ENCODE measurements at regions of chr2 and their contacts with region 1.

Region 1: DNA sequence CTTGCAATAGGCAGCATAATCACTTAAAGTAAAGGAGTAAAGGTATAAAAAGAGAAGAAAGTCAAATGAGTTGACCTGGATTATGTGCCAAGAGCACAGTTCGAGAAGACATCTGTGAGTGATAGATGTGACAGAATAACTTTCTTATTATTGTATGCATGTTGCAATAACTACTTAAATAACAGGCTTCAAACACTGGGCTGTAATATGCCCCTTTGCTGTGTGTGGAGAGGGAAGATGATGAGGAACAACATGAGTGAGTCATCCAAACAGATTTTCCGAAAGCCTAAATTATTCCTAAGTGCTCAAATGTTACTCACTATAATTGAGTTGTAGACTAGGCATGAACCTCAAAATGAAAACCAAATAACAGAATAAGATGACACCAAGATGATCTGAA is 328.1 kb downstream of the EXOC6B start:
- DNase-seq: no peak
- ATAC-seq: no peak
- H3K4me3 ChIP-seq: no peak overlapping the region
- H3K4me3 Mint-ChIP-seq: no peak overlapping the region
- H3K27ac ChIP-seq: no peak overlapping the region
- H3K27ac Mint-ChIP-seq: no peak overlapping the region
- H3K4me1 ChIP-seq: no peaks in the 10 kb centered on the region
- H3K4me1 Mint-ChIP-seq: no peaks in the 10 kb centered on the region
- H3K27me3 ChIP-seq: no peaks in the 10 kb centered on the region
- H3K27me3 Mint-ChIP-seq: no peaks in the 10 kb centered on the region

Region 2: DNA sequence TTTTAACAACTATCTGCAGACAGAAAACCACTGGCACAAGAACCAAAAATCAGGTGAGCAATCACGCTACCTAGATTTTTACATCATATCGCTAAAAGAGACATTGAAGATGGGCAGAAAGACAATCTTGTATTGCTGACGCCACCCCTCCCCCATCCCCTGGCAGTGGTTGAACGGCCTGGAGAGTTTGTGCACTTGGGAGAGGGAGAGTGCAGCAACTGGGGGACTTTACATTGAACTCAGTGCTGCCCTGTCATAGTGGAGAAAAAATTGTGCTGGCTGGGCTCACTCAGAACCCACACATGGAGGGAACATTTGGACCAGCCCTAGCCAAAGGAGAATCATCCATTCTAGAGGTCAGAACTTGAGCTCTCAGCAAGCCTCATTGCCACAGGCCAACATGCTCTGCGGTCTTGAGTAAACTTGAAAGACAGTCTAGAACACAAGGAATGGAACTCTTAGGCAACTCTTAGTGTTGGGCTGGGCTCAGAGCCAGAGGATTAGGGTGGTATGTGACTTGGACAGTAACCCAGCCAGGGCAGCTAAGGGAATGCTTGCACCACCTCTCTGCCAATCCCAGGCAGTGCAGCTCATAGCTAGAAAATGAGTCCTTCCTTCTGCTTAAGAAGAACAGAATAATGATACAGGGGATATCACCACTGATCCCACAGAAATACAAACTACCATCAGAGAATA is 130.1 kb before region 1 on chr2:
- CTCF ChIA-PET with region 1: no interaction called
- POLR2A ChIA-PET with region 1: no interaction called
- DNase-seq: no peak
- ATAC-seq: no peak
- H3K4me3 ChIP-seq: no peak overlapping the region
- H3K4me3 Mint-ChIP-seq: no peak overlapping the region
- H3K27ac ChIP-seq: no peak overlapping the region
- H3K27ac Mint-ChIP-seq: no peak overlapping the region
- H3K4me1 ChIP-seq: no peaks in the 10 kb centered on the region
- H3K4me1 Mint-ChIP-seq: no peaks in the 10 kb centered on the region
- H3K27me3 ChIP-seq: no peaks in the 10 kb centered on the region
- H3K27me3 Mint-ChIP-seq: no peaks in the 10 kb centered on the region

Region 3: DNA sequence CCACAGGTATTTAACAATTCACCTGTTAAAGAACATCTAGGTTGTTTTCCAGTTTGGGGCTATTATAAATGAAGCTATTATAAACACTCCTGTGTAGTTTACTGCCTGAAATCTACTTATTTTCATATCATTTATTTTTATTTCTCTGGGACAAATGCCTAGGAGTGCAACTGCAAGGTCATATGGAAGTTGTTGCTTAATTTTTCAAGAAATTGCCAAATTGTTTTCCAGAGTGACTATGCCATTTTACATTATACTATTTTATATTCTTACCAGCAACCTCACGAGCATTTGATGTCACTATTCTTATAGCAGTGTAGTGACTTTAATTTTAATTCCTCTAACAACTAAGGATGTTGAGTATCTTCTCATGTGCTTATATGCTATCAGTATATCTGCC is 29.7 kb after region 1 on chr2:
- CTCF ChIA-PET with region 1: no interaction called
- POLR2A ChIA-PET with region 1: no interaction called
- DNase-seq: no peak
- ATAC-seq: no peak
- H3K4me3 ChIP-seq: no peak overlapping the region
- H3K4me3 Mint-ChIP-seq: no peak overlapping the region
- H3K27ac ChIP-seq: no peak overlapping the region
- H3K27ac Mint-ChIP-seq: no peak overlapping the region
- H3K4me1 ChIP-seq: no peaks in the 10 kb centered on the region
- H3K4me1 Mint-ChIP-seq: no peaks in the 10 kb centered on the region
- H3K27me3 ChIP-seq: no peaks in the 10 kb centered on the region
- H3K27me3 Mint-ChIP-seq: no peaks in the 10 kb centered on the region

Region 4: GRCh38 chr2:73588177-73588576 is 1090.4 kb after region 1 on chr2:
- CTCF ChIA-PET with region 1: no interaction called
- POLR2A ChIA-PET with region 1: interaction called in 1 of 2 experiments, 12 read pairs
- DNase-seq: no peak
- ATAC-seq: no peak
- H3K4me3 ChIP-seq: no peak overlapping the region
- H3K4me3 Mint-ChIP-seq: no peak overlapping the region
- H3K27ac ChIP-seq: no peak overlapping the region
- H3K27ac Mint-ChIP-seq: no peak overlapping the region
- H3K4me1 ChIP-seq: no peaks in the 10 kb centered on the region
- H3K4me1 Mint-ChIP-seq: peaks cover 3 to 9% (median 8%) of the 10 kb centered on the region in 3 donors
- H3K27me3 ChIP-seq: no peaks in the 10 kb centered on the region
- H3K27me3 Mint-ChIP-seq: no peaks in the 10 kb centered on the region